Lower lobe of right lung (tissue), 2 donors: ENCODE measurements at regions of chr16 and their contacts with region 1.

Region 1: GRCh38 chr16:81723098-81723723 is 55.9 kb upstream of the PLCG2 start:
- DNase-seq: no peak
- ATAC-seq: peak; percentile 88 to 92
- H3K4me3 ChIP-seq: no peak overlapping the region
- H3K27ac ChIP-seq: no peak overlapping the region
- H3K4me1 ChIP-seq: peaks cover 19% of the 10 kb centered on the region
- H3K27me3 ChIP-seq: no peaks in the 10 kb centered on the region
- CTCF ChIP-seq: peak; percentile 69

Region 2: GRCh38 chr16:81403616-81404373 is 319.4 kb before region 1 on chr16:
- intact Hi-C with region 1: loop called (anchors 10 kb)
- DNase-seq: peak; percentile 93
- ATAC-seq: peak; percentile 95
- H3K4me3 ChIP-seq: peak overlapping the region; percentile 38
- H3K27ac ChIP-seq: no peak overlapping the region
- H3K4me1 ChIP-seq: peaks cover 10% of the 10 kb centered on the region
- H3K27me3 ChIP-seq: no peaks in the 10 kb centered on the region
- CTCF ChIP-seq: peak; percentile 98

Region 3: DNA sequence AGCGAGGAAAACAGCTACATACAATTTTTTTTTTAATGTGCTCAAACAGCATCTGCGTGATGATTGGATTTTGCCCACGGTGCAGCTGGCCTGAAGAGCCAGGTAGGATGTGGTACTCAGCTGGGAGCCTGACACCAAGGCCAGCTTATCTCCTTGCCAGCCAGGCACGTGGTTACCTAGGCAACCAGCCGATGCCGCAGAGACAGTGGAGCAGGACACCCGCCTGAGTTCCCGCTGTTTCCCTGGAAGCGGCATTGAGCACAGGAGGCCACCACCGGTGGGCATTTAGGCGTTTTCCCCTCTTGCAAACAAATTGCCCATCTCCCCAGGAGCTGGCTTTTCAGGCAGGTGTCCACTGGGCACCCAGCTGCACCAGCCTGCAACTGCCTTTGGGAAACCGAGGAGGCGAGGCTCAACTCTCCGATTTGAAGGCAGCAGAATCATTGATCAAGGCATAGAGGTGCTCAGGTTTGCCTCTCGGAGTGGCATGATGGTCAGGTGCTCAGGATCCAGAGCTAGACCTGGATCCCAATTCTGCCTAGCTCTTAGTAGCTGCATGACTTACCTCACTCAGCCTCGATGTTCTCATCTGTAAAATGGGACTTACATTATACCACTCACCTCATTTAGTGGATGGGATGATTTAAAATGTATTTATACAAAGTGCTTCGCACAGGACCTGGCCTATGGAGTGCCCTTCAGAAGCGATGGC is 81.7 kb before region 1 on chr16:
- intact Hi-C with region 1: no loop called
- DNase-seq: no peak
- ATAC-seq: no peak
- H3K4me3 ChIP-seq: no peak overlapping the region
- H3K27ac ChIP-seq: no peak overlapping the region
- H3K4me1 ChIP-seq: peaks cover 24% of the 10 kb centered on the region
- H3K27me3 ChIP-seq: no peaks in the 10 kb centered on the region
- CTCF ChIP-seq: no peak